Gastrocnemius medialis (tissue), 4 donors: ENCODE measurements at regions of chr9 and their contacts with region 1.

Region 1: GRCh38 chr9:3954331-3955304 is 345.2 kb downstream of the GLIS3 start:
- DNase-seq: no peak
- ATAC-seq: no peak
- H3K4me3 ChIP-seq: no peak overlapping the region
- H3K27ac ChIP-seq: no peak overlapping the region
- H3K4me1 ChIP-seq: no peaks in the 10 kb centered on the region
- H3K27me3 ChIP-seq: no peaks in the 10 kb centered on the region
- CTCF ChIP-seq: no peak
- POLR2A ChIP-seq: no peak

Region 2: DNA sequence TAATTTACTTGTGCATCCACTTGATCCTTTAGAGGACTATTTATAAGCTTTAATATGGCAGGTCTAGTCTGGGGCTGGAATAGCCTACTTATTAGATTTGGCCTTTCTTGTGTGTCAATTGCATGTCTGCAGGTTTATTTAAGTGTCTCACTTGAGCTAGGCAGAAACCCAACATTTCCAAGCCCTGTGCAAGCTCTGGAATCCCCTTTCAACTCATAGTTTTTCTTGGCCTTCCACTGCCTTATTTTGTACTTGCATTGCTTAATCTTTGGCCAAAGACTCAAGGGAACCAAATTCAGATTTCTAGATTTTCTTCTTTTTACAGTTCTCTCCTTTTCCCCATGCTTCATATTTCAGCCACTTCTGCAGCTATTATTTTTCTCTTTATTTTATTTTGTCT is 326.4 kb before region 1 on chr9:
- in situ Hi-C with region 1: no loop called
- intact Hi-C with region 1: no loop called
- DNase-seq: no peak
- ATAC-seq: no peak
- H3K4me3 ChIP-seq: no peak overlapping the region
- H3K27ac ChIP-seq: no peak overlapping the region
- H3K4me1 ChIP-seq: no peaks in the 10 kb centered on the region
- H3K27me3 ChIP-seq: no peaks in the 10 kb centered on the region
- CTCF ChIP-seq: no peak
- POLR2A ChIP-seq: no peak

Region 3: DNA sequence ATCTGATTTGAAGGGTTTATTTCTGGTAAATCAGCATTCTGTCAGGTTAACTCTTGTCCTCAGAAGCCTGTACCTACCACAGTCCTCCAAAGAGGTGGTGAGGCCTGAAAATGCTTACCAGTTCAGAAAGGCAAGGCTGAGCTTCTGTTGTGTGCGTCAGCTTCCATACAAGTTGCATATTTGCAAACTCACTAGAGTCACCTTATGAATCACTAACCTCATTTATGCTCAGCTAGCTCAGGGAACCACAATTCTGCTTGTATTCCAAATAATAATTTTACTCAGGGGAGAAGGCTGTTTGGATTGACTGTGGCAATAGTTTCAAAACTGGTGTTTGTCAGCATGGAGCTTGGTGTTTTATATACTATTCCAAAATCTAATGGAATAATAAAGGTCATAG is 73.8 kb before region 1 on chr9:
- in situ Hi-C with region 1: no loop called
- intact Hi-C with region 1: loop called (anchors 10 kb)
- DNase-seq: no peak
- ATAC-seq: peak in 1 of 2 donors; percentile 38
- H3K4me3 ChIP-seq: no peak overlapping the region
- H3K27ac ChIP-seq: peak overlapping the region in 3 of 4 donors; percentile 58 to 78 (median 61)
- H3K4me1 ChIP-seq: peaks cover 0 to 16% of the 10 kb centered on the region in 2 donors
- H3K27me3 ChIP-seq: no peaks in the 10 kb centered on the region
- CTCF ChIP-seq: no peak
- POLR2A ChIP-seq: no peak